ENCODE measurements at regions of chr2 and their contacts with region 1.

Region 1: GRCh38 chr2:33033606-33034081 is 86.9 kb downstream of the LTBP1 start:
- DNase-seq: no peak
- H3K4me3 ChIP-seq: peak overlapping the region; percentile 48 to 50
- H3K27ac ChIP-seq: peak overlapping the region; percentile 48 to 69
- H3K4me1 ChIP-seq: peaks cover 0 to 65% (median 7%) of the 10 kb centered on the region in 4 donors
- H3K27me3 ChIP-seq: no peaks in the 10 kb centered on the region
- CTCF ChIP-seq: peak; percentile 56 to 72

Region 2: DNA sequence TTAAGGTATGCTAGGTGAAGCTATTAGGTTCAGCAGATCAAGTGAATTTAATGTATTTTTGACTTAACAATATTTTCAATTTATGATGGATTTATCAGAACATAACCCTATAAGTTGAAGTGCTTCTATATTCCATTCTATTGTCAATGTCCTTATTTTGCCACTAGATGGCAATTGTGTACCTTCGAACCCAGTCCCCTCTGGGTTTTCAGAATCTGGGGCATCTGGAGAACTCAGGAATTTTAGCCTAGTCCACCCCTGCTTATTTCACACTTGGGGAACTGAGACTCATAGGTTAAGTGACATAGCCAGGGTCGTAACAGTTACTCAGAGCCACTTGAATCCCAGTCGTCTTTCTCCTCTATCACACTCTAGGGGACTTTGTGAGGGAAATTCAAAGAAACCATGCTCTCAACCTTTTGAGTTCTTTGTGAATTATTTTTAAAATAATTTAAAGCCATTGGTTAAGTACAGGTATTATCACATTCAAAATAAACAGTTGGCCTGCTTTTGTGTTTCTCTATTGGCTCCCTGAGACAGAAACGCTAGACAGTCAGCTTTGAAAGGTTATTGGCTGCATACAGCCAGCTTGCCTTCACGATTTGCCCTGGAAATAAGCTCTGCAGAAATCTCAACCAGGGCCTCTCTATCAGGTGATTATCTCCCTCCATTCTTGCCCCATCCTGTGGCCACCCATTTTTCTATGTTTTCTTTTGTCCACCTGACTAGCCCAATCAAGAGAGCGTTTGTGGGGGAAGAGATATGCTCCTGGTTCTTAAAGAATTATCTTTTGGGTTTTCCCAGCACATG is 260.8 kb before region 1 on chr2:
- intact Hi-C with region 1: loop called (anchors 5 kb)
- DNase-seq: no peak
- H3K4me3 ChIP-seq: no peak overlapping the region
- H3K27ac ChIP-seq: no peak overlapping the region
- H3K4me1 ChIP-seq: peaks cover 0 to 6% (median 0%) of the 10 kb centered on the region in 4 donors
- H3K27me3 ChIP-seq: no peaks in the 10 kb centered on the region
- CTCF ChIP-seq: peak; percentile 62 to 81

Region 3: DNA sequence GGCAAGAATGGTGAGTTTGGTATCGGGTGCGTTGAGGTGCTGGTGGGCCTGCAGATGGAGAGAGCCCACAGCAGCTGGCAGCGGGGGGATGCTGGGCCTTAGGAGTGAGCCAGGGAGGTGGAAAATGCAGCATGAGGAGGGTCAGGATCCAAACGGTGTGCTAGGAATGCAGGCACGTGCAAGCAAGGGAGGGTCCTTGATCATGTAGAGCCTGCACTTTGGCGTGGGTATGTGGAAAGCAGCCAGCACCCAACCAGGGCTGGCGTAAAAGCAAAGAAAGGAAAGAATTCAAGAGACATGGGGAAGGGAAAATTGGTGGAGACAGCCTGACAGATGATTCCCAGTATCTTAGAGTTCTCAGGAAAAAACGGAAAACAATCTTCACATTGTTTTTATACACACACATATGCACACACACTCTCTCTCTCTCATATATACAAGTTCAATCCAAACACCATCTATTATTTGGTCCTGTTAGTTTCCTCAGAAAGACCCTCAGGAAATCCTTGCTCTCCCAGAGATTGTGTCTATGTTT is 40.6 kb before region 1 on chr2:
- intact Hi-C with region 1: no loop called
- DNase-seq: no peak
- H3K4me3 ChIP-seq: no peak overlapping the region
- H3K27ac ChIP-seq: no peak overlapping the region
- H3K4me1 ChIP-seq: no peaks in the 10 kb centered on the region
- H3K27me3 ChIP-seq: no peaks in the 10 kb centered on the region
- CTCF ChIP-seq: no peak

Region 4: GRCh38 chr2:33441235-33441810 is 407.7 kb after region 1 on chr2:
- intact Hi-C with region 1: loop called (anchors 5 kb)
- DNase-seq: peak; percentile 61 to 82
- H3K4me3 ChIP-seq: no peak overlapping the region
- H3K27ac ChIP-seq: peak overlapping the region; percentile 13 to 18
- H3K4me1 ChIP-seq: peaks cover 0 to 32% (median 9%) of the 10 kb centered on the region in 4 donors
- H3K27me3 ChIP-seq: no peaks in the 10 kb centered on the region
- CTCF ChIP-seq: peak; percentile 64 to 76

Region 5: GRCh38 chr2:33583194-33583938 is 549.7 kb after region 1 on chr2:
- intact Hi-C with region 1: loop called (anchors 2 kb)
- DNase-seq: peak in 1 of 2 donors; percentile 42
- H3K4me3 ChIP-seq: no peak overlapping the region
- H3K27ac ChIP-seq: no peak overlapping the region
- H3K4me1 ChIP-seq: peaks cover 0 to 25% (median 1%) of the 10 kb centered on the region in 4 donors
- H3K27me3 ChIP-seq: no peaks in the 10 kb centered on the region
- CTCF ChIP-seq: peak; percentile 76 to 81